K562 (cell line): ENCODE measurements at regions of chr1 and their contacts with region 1.

Region 1: GRCh38 chr1:28602536-28603439 is 10.7 kb downstream of the RAB42 start:
- DNase-seq: peak; percentile 67 to 86 (median 73)
- ATAC-seq: peak; percentile 91
- H3K4me3 ChIP-seq: no peak overlapping the region
- H3K27ac ChIP-seq: no peak overlapping the region
- H3K4me1 ChIP-seq: no peaks in the 10 kb centered on the region
- H3K27me3 ChIP-seq: no peaks in the 10 kb centered on the region
- CTCF ChIP-seq: peak; percentile 82 to 94 (median 86)
- EP300 ChIP-seq: no peak
- POLR2A ChIP-seq: no peak
- RAD21 ChIP-seq: peak; percentile 92 to 97

Region 2: DNA sequence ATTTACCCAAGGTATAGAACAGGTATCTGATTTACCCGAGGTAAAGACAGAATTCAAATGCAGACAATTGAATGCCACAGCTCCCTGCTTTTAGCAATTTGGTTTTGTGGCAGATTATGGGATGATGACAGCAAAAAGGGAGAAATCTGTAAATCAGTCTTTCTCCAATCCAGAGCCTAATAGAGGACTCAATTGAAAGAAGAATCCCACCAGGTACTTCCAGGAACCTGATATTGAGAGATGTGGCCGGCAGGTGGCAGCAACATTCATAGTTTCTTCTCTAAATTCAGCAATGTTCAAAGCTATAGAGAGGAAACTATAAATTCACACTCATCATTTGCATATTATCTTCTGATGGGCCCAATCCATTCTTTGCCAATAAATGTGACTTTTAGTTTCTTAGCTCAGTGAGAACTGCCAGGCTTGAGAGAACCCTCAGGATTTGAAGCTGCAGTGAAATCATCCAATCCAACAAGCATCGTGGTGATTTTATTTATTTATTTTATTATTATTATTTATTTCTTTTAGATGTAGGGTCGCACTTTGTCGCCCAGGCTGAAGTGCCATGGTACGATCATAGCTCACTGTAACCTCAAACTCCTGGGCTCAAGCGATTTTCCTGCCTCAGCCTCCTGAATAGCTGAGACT is 243.1 kb before region 1 on chr1:
- CTCF ChIA-PET with region 1: interaction called, 17 read pairs
- POLR2A ChIA-PET with region 1: interaction called, 4 read pairs
- in situ Hi-C with region 1: no loop called
- intact Hi-C with region 1: loop called (anchors 5 kb)
- DNase-seq: peak; percentile 63 to 84 (median 68)
- ATAC-seq: peak; percentile 88
- H3K4me3 ChIP-seq: no peak overlapping the region
- H3K27ac ChIP-seq: no peak overlapping the region
- H3K4me1 ChIP-seq: peaks cover 6 to 7% of the 10 kb centered on the region in 2 experiments; a peak in 3 of 5 replicates
- H3K27me3 ChIP-seq: no peaks in the 10 kb centered on the region
- CTCF ChIP-seq: peak; percentile 65 to 86 (median 77)
- EP300 ChIP-seq: peak; percentile 33
- POLR2A ChIP-seq: no peak
- RAD21 ChIP-seq: peak; percentile 72 to 83

Region 3: DNA sequence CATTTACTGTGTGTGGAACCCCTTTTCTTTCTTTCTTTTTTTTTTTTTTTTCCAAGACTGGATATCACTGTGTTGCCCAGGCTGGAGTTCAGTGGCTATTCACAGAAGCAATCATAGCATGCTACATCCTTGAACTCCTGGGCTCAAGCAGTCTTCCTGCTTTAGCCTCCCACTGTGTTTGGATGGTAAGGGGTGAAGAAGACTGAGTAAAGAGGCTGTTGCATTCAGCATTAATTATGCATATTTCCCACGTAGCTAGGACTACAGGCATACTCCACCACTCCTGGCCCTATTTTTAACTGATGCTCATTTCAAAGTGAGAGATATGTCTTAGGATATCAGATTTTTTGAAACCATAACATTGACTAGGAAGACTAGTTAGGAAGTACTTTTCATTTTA is 193.7 kb before region 1 on chr1:
- CTCF ChIA-PET with region 1: interaction called, 9 read pairs
- POLR2A ChIA-PET with region 1: interaction called, 8 read pairs
- in situ Hi-C with region 1: loop called (anchors 5 kb)
- intact Hi-C with region 1: loop called (anchors 2 kb)
- DNase-seq: no peak
- ATAC-seq: no peak
- H3K4me3 ChIP-seq: no peak overlapping the region
- H3K27ac ChIP-seq: no peak overlapping the region
- H3K4me1 ChIP-seq: peaks cover 3 to 23% of the 10 kb centered on the region in 2 experiments; a peak in 3 of 5 replicates
- H3K27me3 ChIP-seq: no peaks in the 10 kb centered on the region
- CTCF ChIP-seq: no peak
- EP300 ChIP-seq: no peak
- POLR2A ChIP-seq: no peak
- RAD21 ChIP-seq: no peak

Region 4: DNA sequence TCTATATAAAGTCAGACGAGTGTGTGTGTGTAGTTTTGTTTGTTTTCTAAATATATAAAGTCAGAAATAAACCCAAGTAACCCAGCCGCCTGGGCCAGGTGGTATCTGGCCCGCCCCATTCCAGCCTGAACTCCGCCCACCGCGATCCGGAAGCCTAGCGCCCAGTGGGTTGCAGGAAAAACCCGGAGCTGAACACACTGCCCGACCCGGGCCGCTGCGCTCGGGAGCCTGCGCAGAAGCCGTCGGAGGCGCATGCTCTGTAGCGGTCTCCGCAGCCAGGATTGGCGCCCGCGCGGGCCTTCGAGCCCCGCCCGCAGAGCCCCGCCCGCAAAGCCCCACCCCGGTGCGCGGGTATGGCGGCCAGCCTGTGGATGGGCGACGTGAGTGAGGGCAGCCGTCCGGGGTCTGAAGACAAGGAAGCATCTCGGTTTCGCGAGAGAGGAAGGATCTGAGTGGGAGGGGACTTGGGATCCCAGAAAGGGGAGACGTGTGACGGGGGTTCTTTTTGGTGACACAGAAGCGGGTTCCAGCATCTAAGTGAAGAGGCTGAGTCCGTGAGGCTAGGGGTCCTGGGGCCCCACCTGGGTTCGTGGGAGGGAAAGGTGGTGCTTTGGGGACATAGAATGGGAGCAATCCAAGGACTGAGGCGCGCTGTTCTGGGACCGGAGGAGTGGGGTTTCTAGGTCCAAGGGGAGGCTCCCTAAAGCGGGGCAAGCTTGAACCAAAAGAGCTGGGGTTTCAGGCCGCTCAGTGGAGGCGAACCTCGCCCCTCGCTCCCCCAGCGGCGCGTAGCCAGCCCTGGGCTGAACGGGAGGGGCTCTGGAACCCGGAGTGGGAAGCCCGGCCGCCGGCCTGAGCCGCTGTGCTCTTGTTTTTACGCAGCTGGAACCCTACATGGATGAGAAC is 49.8 kb before region 1 on chr1 and contains the start of gene TRNAU1AP:
- CTCF ChIA-PET with region 1: no interaction called
- POLR2A ChIA-PET with region 1: interaction called, 5 read pairs
- in situ Hi-C with region 1: no loop called
- intact Hi-C with region 1: loop called (anchors 5 kb)
- DNase-seq: peak; percentile 98 to 99 (median 98)
- ATAC-seq: peak; percentile 98
- H3K4me3 ChIP-seq: peak within 1 kb of the TSS; percentile 57
- H3K27ac ChIP-seq: peak within 1 kb of the TSS; percentile 82
- H3K4me1 ChIP-seq: peaks cover 9 to 20% of the 10 kb centered on the region in 2 experiments; a peak in 4 of 5 replicates
- H3K27me3 ChIP-seq: no peaks in the 10 kb centered on the region
- CTCF ChIP-seq: 0 out of 6 replicates have a peak, but pooled peaks of 1 of the 3 experiments have one; percentile 0
- EP300 ChIP-seq: peak; percentile 47
- POLR2A ChIP-seq: peak; percentile 85
- RAD21 ChIP-seq: no peak
- polyA plus RNA-seq, gene TRNAU1AP: 99.0 to 110 TPM

Region 5: DNA sequence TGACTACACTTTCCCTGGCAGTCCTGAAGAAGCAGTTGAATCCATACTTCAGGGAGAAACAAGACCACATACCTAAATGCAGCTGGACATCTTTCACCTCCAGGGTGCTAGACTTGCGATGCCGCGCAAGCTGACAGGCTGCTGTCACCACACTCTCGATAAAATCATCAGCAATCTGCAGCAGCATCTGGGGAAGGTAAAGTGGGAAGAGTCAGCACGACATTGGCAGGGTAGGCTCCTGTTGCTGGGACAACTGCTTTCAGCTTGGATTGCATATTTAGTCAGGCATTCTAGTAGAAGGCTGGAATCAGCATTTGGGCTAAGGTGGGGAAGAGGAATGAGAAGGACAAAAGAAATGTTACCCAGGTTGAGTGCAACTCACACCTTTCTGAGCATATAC is 10.4 kb after region 1 on chr1:
- CTCF ChIA-PET with region 1: no interaction called
- POLR2A ChIA-PET with region 1: interaction called, 11 read pairs
- in situ Hi-C with region 1: no loop called
- intact Hi-C with region 1: no loop called
- DNase-seq: no peak
- ATAC-seq: no peak
- H3K4me3 ChIP-seq: no peak overlapping the region
- H3K27ac ChIP-seq: no peak overlapping the region
- H3K4me1 ChIP-seq: no peaks in the 10 kb centered on the region
- H3K27me3 ChIP-seq: no peaks in the 10 kb centered on the region
- CTCF ChIP-seq: no peak
- EP300 ChIP-seq: no peak
- POLR2A ChIP-seq: no peak
- RAD21 ChIP-seq: no peak

Region 6: GRCh38 chr1:28756846-28757245 is 154.1 kb after region 1 on chr1:
- CTCF ChIA-PET with region 1: no interaction called
- POLR2A ChIA-PET with region 1: no interaction called
- in situ Hi-C with region 1: no loop called
- intact Hi-C with region 1: no loop called
- DNase-seq: no peak
- ATAC-seq: peak; percentile 59
- H3K4me3 ChIP-seq: no peak overlapping the region
- H3K27ac ChIP-seq: no peak overlapping the region
- H3K4me1 ChIP-seq: peaks cover 5 to 12% of the 10 kb centered on the region in 2 experiments; a peak in 3 of 5 replicates
- H3K27me3 ChIP-seq: no peaks in the 10 kb centered on the region
- CTCF ChIP-seq: peak; percentile 24 to 51 (median 36); a peak in 4 of 6 replicates
- EP300 ChIP-seq: no peak
- POLR2A ChIP-seq: no peak
- RAD21 ChIP-seq: peak in 1 of 2 experiments; percentile 37; a peak in 1 of 4 replicates